Natural killer cell (primary cell): ENCODE measurements at regions of chr17 and their contacts with region 1.

Region 1: DNA sequence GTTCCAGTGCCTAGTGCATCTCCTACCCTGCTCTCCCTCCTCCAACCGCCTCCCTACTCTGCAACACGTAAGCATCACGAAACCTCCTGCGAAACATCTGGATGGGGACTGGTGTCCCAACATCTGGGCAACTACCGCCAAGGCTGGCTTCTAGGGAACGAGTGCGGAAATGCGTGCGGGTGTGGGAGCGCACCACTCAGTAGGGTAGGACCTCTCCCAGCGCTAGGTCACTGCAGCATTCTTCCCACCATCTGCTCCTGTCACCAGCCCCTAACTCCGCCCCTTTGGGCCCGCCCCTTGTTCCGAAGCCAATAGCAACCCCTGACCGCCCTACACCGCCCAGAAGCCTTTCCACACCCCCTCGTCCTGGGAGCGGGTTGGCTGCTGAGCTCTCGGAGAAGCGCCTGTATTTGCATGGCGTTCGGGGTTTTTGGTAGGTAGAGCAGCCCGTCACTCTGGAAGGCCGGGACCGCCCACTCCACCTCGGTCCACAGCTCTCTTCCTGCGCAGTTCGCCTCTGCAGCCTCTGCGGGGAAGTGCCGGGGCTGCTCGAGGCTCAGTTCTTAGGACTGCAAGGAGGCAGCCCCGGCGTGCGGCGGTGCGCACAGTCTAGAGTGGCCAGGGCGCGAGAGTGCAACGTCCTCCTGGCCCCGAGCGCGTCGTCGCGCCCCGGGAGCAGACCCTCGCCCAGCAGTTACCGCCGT is at the start of gene HS3ST3B1:
- DNase-seq: peak; percentile 99
- ATAC-seq: peak; percentile 80 to 94 (median 82)
- H3K4me3 ChIP-seq: peak within 1 kb of the TSS; percentile 58
- H3K4me3 Mint-ChIP-seq: peak within 1 kb of the TSS; percentile 97
- H3K27ac ChIP-seq: peak within 1 kb of the TSS; percentile 77
- H3K27ac Mint-ChIP-seq: peak within 1 kb of the TSS; percentile 91 to 93
- H3K4me1 ChIP-seq: peaks cover 62% of the 10 kb centered on the region
- H3K4me1 Mint-ChIP-seq: peaks cover 57 to 76% of the 10 kb centered on the region in 2 donors
- H3K27me3 ChIP-seq: peaks cover 17% of the 10 kb centered on the region
- H3K27me3 Mint-ChIP-seq: peaks cover 17 to 22% of the 10 kb centered on the region in 2 donors
- CTCF ChIP-seq: no peak
- total RNA-seq, gene HS3ST3B1: 14.1 to 18.6 (median 17.1) TPM

Region 2: DNA sequence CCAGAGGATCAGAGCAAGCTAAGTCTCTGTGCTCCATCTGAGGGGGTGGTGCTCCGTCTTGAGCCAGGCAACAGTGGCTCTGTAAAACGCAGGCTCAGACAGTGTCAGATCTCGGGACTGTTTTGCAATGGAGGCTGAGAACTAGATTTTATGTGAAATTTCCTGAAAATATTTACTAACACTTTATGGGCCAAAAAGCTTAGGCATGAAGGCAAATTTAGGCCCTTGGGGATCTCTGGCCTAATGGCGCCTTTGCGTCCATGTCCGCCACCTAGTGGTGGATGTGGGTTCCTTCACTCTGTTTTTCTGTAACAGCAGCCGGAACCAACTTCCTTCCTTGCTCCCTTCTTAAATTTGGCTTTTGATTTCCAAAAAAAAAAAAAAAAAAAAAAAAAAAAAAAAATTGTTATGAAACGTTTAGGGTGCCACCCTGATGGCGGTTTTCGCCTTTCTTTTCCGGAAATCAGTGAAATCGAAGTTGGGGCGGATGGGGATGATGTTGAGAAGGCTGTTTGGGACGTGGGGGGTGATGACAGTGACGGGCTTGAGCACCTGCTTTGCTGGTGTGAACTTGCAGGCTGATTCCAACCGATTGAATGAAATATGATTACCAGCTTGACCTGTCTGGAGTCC is 1268.9 kb before region 1 on chr17:
- intact Hi-C with region 1: loop called (anchors 5 kb)
- DNase-seq: peak in 1 of 2 donors; percentile 79
- ATAC-seq: peak in 2 of 3 donors; percentile 80 to 81
- H3K4me3 ChIP-seq: no peak overlapping the region
- H3K4me3 Mint-ChIP-seq: no peak overlapping the region
- H3K27ac ChIP-seq: no peak overlapping the region
- H3K27ac Mint-ChIP-seq: no peak overlapping the region
- H3K4me1 ChIP-seq: peaks cover 3% of the 10 kb centered on the region
- H3K4me1 Mint-ChIP-seq: peaks cover 0 to 11% of the 10 kb centered on the region in 2 donors
- H3K27me3 ChIP-seq: no peaks in the 10 kb centered on the region
- H3K27me3 Mint-ChIP-seq: peaks cover 7 to 13% of the 10 kb centered on the region in 2 donors
- CTCF ChIP-seq: peak; percentile 89

Region 3: DNA sequence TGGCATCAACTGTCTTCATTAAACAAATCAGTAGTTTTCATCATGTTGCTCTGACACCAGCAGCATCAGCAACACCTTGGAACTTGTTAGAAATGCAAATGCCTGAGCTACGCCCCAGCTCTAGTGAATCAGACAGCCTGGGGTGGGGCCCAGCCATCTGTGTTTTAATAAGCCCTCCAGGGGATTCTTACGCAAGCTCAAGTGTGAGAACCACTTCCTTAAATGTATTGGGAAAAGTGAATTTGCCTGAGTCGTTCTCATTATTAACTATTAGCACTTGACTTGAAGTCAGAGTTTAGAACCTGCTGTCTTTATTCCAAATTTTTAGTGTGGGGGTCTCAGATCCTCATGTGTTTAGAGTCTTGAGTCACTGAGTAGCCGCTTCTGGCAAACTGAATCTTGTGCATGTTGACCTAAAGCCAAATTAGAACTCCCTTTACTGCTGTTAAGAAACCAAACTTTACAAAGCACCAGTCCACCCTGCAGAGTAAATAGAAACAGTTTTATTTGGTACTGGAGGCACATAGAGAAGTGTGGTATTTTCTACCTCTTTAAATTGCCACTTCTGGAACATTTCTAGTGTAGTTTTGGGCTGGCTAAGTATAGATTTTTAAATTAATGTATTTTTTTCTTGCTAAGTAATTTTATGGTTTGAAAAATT is 368.8 kb before region 1 on chr17:
- intact Hi-C with region 1: loop called (anchors 1 kb)
- DNase-seq: peak; percentile 8 to 41
- ATAC-seq: peak; percentile 76 to 95 (median 93)
- H3K4me3 ChIP-seq: no peak overlapping the region
- H3K4me3 Mint-ChIP-seq: no peak overlapping the region
- H3K27ac ChIP-seq: peak overlapping the region; percentile 87
- H3K27ac Mint-ChIP-seq: peak overlapping the region; percentile 85
- H3K4me1 ChIP-seq: peaks cover 7% of the 10 kb centered on the region
- H3K4me1 Mint-ChIP-seq: peaks cover 19% of the 10 kb centered on the region in 2 donors
- H3K27me3 ChIP-seq: no peaks in the 10 kb centered on the region
- H3K27me3 Mint-ChIP-seq: no peaks in the 10 kb centered on the region
- CTCF ChIP-seq: no peak

Region 4: GRCh38 chr17:14058051-14058450 is 242.7 kb before region 1 on chr17:
- intact Hi-C with region 1: no loop called
- DNase-seq: no peak
- ATAC-seq: no peak
- H3K4me3 ChIP-seq: no peak overlapping the region
- H3K4me3 Mint-ChIP-seq: no peak overlapping the region
- H3K27ac ChIP-seq: no peak overlapping the region
- H3K27ac Mint-ChIP-seq: no peak overlapping the region
- H3K4me1 ChIP-seq: no peaks in the 10 kb centered on the region
- H3K4me1 Mint-ChIP-seq: peaks cover 14 to 20% of the 10 kb centered on the region in 2 donors
- H3K27me3 ChIP-seq: no peaks in the 10 kb centered on the region
- H3K27me3 Mint-ChIP-seq: no peaks in the 10 kb centered on the region
- CTCF ChIP-seq: no peak

Region 5: GRCh38 chr17:14069251-14070021 is 231.3 kb before region 1 on chr17 and contains the start of gene COX10:
- intact Hi-C with region 1: loop called (anchors 2 kb)
- DNase-seq: peak; percentile 79 to 86
- ATAC-seq: peak; percentile 96 to 99 (median 98)
- H3K4me3 ChIP-seq: peak within 1 kb of the TSS; percentile 100
- H3K4me3 Mint-ChIP-seq: peak within 1 kb of the TSS; percentile 96
- H3K27ac ChIP-seq: peak within 1 kb of the TSS; percentile 80
- H3K27ac Mint-ChIP-seq: peak within 1 kb of the TSS; percentile 90 to 92
- H3K4me1 ChIP-seq: peaks cover 13% of the 10 kb centered on the region
- H3K4me1 Mint-ChIP-seq: peaks cover 36 to 39% of the 10 kb centered on the region in 2 donors
- H3K27me3 ChIP-seq: no peaks in the 10 kb centered on the region
- H3K27me3 Mint-ChIP-seq: no peaks in the 10 kb centered on the region
- CTCF ChIP-seq: no peak
- total RNA-seq, gene COX10: 12.5 to 17.0 (median 13.5) TPM

Region 6: GRCh38 chr17:14359163-14360020 is 58.7 kb after region 1 on chr17:
- intact Hi-C with region 1: loop called (anchors 2 kb)
- DNase-seq: peak; percentile 72 to 75
- ATAC-seq: peak; percentile 91 to 99 (median 95)
- H3K4me3 ChIP-seq: no peak overlapping the region
- H3K4me3 Mint-ChIP-seq: peak overlapping the region; percentile 54
- H3K27ac ChIP-seq: no peak overlapping the region
- H3K27ac Mint-ChIP-seq: peak overlapping the region; percentile 49 to 52
- H3K4me1 ChIP-seq: peaks cover 25% of the 10 kb centered on the region
- H3K4me1 Mint-ChIP-seq: peaks cover 22 to 26% of the 10 kb centered on the region in 2 donors
- H3K27me3 ChIP-seq: peaks cover 3% of the 10 kb centered on the region
- H3K27me3 Mint-ChIP-seq: peaks cover 10 to 26% of the 10 kb centered on the region in 2 donors
- CTCF ChIP-seq: peak; percentile 48

Region 7: GRCh38 chr17:14389681-14390080 is 89.0 kb after region 1 on chr17:
- intact Hi-C with region 1: no loop called
- DNase-seq: no peak
- ATAC-seq: no peak
- H3K4me3 ChIP-seq: no peak overlapping the region
- H3K4me3 Mint-ChIP-seq: no peak overlapping the region
- H3K27ac ChIP-seq: no peak overlapping the region
- H3K27ac Mint-ChIP-seq: no peak overlapping the region
- H3K4me1 ChIP-seq: no peaks in the 10 kb centered on the region
- H3K4me1 Mint-ChIP-seq: no peaks in the 10 kb centered on the region
- H3K27me3 ChIP-seq: no peaks in the 10 kb centered on the region
- H3K27me3 Mint-ChIP-seq: no peaks in the 10 kb centered on the region
- CTCF ChIP-seq: no peak

Region 8: GRCh38 chr17:14553855-14554254 is 253.1 kb after region 1 on chr17:
- intact Hi-C with region 1: loop called (anchors 10 kb)
- DNase-seq: peak in 1 of 2 donors; percentile 31
- ATAC-seq: no peak
- H3K4me3 ChIP-seq: no peak overlapping the region
- H3K4me3 Mint-ChIP-seq: no peak overlapping the region
- H3K27ac ChIP-seq: no peak overlapping the region
- H3K27ac Mint-ChIP-seq: no peak overlapping the region
- H3K4me1 ChIP-seq: no peaks in the 10 kb centered on the region
- H3K4me1 Mint-ChIP-seq: peaks cover 7 to 11% of the 10 kb centered on the region in 2 donors
- H3K27me3 ChIP-seq: no peaks in the 10 kb centered on the region
- H3K27me3 Mint-ChIP-seq: peaks cover 0 to 10% of the 10 kb centered on the region in 2 donors
- CTCF ChIP-seq: no peak